Posterior vena cava (tissue), 2 donors: ENCODE measurements at regions of chr5 and their contacts with region 1.

Region 1: GRCh38 chr5:13994621-13995253 is 50.2 kb upstream of the DNAH5 start:
- DNase-seq: no peak

Region 2: DNA sequence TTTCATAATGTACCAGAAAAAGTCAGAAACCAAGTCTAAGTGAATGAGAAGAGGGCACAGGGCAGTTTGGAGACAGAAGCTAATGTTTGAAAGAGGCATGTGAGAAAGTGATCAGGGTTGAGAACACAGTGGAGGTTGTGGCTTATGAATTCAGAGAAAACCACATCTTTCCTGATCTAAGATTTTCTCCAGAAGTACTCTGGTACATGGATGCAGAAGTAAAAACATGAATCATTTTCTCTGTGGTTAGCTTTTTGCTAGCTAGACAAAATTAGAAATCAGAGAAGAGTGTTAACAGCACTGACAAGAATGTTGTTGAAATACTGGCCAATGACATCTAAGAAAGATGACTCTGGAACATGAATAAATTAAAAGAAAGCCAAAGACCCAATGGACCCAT is 591.4 kb before region 1 on chr5:
- intact Hi-C with region 1: no loop called
- DNase-seq: no peak

Region 3: GRCh38 chr5:13910637-13911288 is 84.0 kb before region 1 on chr5:
- intact Hi-C with region 1: no loop called
- DNase-seq: no peak

Region 4: DNA sequence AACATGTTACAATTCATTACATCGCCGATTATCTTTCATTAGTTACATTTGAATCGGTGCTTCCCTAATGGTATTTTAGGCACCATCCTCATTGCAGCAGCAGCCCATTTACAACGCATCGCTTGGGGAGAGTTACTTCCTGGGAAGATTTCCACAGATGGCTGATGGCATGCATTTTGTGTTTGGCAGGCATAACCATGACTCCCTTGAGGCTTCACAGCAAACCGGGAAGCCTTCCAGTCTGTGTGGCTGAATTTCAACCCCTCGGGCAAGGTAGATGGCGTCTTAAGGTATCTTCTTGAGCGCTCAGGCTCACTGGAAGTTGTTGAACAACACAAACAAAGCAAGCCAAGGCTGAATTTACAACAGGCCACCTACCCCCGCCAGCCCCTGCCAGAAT is 48.6 kb before region 1 on chr5:
- intact Hi-C with region 1: no loop called
- DNase-seq: no peak

Region 5: GRCh38 chr5:14097998-14098471 is 103.3 kb after region 1 on chr5:
- intact Hi-C with region 1: no loop called
- DNase-seq: no peak

Region 6: GRCh38 chr5:14264604-14265316 is 270.0 kb after region 1 on chr5:
- intact Hi-C with region 1: loop called in 1 of 2 experiments (anchors 10 kb)
- DNase-seq: peak; percentile 97